ENCODE measurements at regions of chr12 and their contacts with region 1.

Region 1: GRCh38 chr12:111753144-111753881 is 13.4 kb upstream of the ALDH2 start:
- DNase-seq: peak; percentile 71 to 90 (median 80)
- ATAC-seq: peak; percentile 87 to 93 (median 90)
- H3K4me3 ChIP-seq: no peak overlapping the region
- H3K27ac ChIP-seq: no peak overlapping the region
- H3K4me1 ChIP-seq: peaks cover 10 to 23% (median 13%) of the 10 kb centered on the region in 3 donors
- H3K27me3 ChIP-seq: no peaks in the 10 kb centered on the region
- CTCF ChIP-seq: peak; percentile 42 to 77 (median 64)

Region 2: DNA sequence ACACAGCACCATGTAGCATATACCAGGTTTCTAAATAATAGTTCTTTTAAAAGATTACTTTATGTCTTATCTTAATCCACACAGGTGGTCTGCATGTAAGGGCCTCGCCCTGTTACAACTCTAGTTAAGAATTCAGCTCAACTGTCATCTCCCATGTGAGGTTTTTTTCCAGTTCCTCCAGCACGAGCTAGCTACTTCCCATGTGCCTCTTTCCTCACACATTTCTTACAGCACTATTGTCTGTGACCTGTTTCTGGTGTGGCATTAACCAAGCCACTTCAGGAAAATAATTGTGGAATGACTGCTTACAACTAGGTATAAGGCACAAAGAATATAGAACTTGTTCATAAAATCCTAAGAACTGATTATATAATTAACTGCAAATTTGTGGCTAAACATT is 282.1 kb before region 1 on chr12:
- intact Hi-C with region 1: no loop called
- DNase-seq: no peak
- ATAC-seq: peak in 1 of 4 donors; percentile 14
- H3K4me3 ChIP-seq: no peak overlapping the region
- H3K27ac ChIP-seq: no peak overlapping the region
- H3K4me1 ChIP-seq: peaks cover 0 to 10% (median 7%) of the 10 kb centered on the region in 3 donors
- H3K27me3 ChIP-seq: no peaks in the 10 kb centered on the region
- CTCF ChIP-seq: no peak

Region 3: DNA sequence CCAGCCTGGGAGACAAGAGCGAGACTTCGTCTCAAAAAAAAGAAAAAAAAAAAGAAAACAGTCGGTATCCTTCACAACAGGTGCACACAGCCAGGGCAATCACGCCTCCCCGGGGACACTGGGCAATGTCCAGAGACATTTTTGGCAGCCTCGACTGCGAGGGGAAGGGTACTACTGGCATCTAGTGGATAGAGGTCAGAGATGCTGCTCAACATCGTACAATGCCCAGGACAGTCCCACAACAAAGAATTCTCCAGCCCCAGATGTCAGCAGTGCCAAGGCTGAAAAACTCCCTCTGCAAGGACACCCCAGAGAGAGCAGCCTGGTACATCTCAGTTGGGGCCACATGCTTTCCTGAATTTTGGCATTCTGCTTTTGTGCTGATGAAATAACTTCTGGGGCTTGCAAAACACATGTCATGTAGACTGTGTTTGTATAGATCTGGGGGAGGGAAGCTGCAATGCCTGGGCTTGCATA is 34.9 kb after region 1 on chr12:
- intact Hi-C with region 1: loop called in 2 of 3 experiments (anchors 5 kb)
- DNase-seq: peak; percentile 75 to 87 (median 80)
- ATAC-seq: peak; percentile 87 to 92 (median 91)
- H3K4me3 ChIP-seq: no peak overlapping the region
- H3K27ac ChIP-seq: peak overlapping the region in 2 of 4 donors; percentile 3 to 37
- H3K4me1 ChIP-seq: peaks cover 0 to 19% (median 19%) of the 10 kb centered on the region in 3 donors
- H3K27me3 ChIP-seq: no peaks in the 10 kb centered on the region
- CTCF ChIP-seq: peak in 3 of 4 donors; percentile 51 to 54 (median 53)

Measured in pancreas (tissue), 10 donors.